Activated T-helper 1 cell treated with anti-CD3 and anti-CD28 coated beads, Interleukin-12 subunit alpha, Interleukin-12 subunit beta, Interleukin-2, Interleukin-4 antibody, amounts not matched to agents 30 ng/mL and 10 ng/mL and 1 ng/mL, durations not matched to agents 14 hours and 24 hours and 36 hours (primary cell): ENCODE measurements at regions of chr10 and their contacts with region 1.

Region 1: DNA sequence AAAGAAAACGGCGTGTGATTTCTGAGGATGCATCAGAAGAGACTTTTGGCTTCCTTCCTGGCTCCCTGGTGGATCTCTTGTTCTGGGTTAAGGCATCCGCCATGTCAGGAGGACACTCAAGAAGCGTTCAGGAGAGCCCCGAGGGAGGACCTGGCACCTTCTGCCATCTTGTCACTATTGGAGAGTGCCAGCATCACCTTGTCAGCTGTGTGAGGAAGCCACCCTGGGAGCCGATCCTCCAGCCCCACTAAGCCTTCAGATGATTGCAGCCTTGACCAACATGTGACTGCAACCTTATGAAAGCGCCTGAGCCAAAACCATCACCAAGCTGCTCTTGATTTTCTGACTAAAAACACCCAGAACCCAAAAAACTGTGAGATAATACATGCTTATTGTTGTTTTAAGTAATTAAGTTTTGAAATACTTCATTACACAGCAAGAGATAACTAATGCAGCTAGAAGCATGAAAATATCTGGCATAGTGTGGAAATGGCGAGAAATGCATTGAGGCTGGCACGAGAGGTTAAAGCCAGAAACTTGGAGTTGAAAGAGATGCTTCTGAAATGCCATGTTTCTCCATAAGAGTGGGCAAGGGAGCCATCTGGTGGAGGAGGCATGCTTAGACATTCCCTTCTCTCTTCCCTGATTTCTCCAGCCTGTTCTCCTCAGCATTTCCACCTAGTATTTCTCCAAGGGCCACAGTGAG is 5.4 kb upstream of the ZFYVE27 start:
- DNase-seq: no peak
- H3K4me3 Mint-ChIP-seq: no peak overlapping the region
- H3K27ac Mint-ChIP-seq: no peak overlapping the region
- H3K4me1 Mint-ChIP-seq: peaks cover 8% of the 10 kb centered on the region
- H3K27me3 Mint-ChIP-seq: peaks cover 1% of the 10 kb centered on the region

Region 2: DNA sequence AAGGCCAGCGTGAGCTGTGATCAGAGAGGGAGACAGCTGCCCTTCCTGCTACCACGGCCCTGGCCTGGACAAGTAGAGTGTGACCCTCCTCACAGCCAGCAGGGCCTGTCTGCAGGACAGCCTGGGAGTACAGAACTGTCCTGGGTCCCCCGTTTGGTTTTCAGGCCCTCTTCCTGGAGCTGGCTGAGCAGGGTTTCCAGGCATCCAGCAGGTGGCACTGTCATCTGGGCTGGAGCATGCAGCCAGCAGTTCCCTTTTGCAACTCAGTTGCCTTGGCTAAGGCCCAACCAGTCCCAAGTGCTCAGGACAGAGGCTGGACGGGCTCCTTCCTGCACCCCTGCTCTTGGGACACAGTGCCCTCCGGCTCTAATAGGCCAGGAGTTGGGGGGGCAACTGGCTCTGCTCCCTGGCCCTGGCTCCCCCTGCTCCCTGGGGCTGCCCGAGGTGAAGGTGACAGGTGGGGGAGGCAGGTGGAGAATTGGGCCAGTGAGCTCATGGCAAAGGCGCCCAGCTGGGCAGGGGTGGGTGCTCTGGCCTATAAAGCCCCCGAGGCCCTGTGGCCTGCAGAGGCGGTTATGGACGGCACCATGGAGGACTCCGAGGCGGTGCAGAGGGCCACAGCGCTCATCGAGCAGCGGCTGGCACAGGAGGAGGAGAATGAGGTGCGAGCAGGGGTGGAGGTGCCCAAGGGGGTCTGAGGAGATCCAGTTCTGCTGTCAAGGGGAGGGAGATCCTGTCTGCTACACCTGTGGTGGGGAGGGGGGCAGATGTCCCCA is 159.1 kb before region 1 on chr10 and contains the start of gene ANKRD2:
- intact Hi-C with region 1: loop called (anchors 2 kb)
- DNase-seq: peak; percentile 31
- H3K4me3 Mint-ChIP-seq: no peak within 1 kb of the TSS
- H3K27ac Mint-ChIP-seq: no peak within 1 kb of the TSS
- H3K4me1 Mint-ChIP-seq: no peaks in the 10 kb centered on the region
- H3K27me3 Mint-ChIP-seq: peaks cover 9% of the 10 kb centered on the region
- total RNA-seq, gene ANKRD2: not detected in 2 replicates

Region 3: GRCh38 chr10:97676770-97677581 is 54.5 kb before region 1 on chr10:
- intact Hi-C with region 1: loop called (anchors 1 kb)
- DNase-seq: no peak
- H3K4me3 Mint-ChIP-seq: no peak overlapping the region
- H3K27ac Mint-ChIP-seq: no peak overlapping the region
- H3K4me1 Mint-ChIP-seq: peaks cover 10% of the 10 kb centered on the region
- H3K27me3 Mint-ChIP-seq: no peaks in the 10 kb centered on the region

Region 4: DNA sequence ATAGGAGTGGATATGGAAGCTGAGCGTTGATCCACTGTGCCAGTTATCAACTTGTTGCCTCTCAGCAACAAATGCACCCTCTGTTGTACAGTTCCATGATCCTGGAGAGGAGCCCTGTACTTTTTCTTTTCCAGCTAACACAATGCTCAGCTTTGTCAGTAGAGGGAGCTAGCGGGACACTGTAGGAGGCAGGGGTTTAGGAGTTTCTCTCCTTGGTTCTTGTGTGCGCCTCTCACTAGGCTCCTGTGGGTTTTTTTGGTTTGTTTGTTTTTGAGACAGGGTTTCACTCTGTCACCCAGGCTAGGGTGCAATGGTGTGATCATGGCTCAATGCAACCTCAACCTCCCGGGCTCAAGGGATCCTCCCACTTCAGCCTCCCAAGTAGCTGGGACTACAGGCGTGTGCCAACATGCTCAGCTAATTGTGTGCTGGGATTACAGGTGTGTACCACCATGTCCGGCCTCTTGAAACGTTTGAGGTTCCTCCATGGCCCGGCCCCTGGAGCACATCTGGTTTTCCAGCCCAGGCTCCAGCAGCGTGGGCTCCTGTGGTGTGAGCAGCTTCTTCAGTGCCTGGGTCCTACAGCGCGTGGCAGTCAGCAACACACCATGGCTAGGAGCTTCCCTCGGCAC is 29.9 kb before region 1 on chr10:
- intact Hi-C with region 1: loop called (anchors 1 kb)
- DNase-seq: peak; percentile 34
- H3K4me3 Mint-ChIP-seq: no peak overlapping the region
- H3K27ac Mint-ChIP-seq: no peak overlapping the region
- H3K4me1 Mint-ChIP-seq: no peaks in the 10 kb centered on the region
- H3K27me3 Mint-ChIP-seq: peaks cover 8% of the 10 kb centered on the region

Region 5: GRCh38 chr10:97714048-97714371 is 17.5 kb before region 1 on chr10:
- intact Hi-C with region 1: loop called (anchors 1 kb)
- DNase-seq: peak; percentile 42
- H3K4me3 Mint-ChIP-seq: peak overlapping the region; percentile 97
- H3K27ac Mint-ChIP-seq: peak overlapping the region; percentile 90
- H3K4me1 Mint-ChIP-seq: peaks cover 15% of the 10 kb centered on the region
- H3K27me3 Mint-ChIP-seq: peaks cover 37% of the 10 kb centered on the region

Region 6: GRCh38 chr10:98080494-98080893 is 349.0 kb after region 1 on chr10:
- intact Hi-C with region 1: no loop called
- DNase-seq: no peak
- H3K4me3 Mint-ChIP-seq: no peak overlapping the region
- H3K27ac Mint-ChIP-seq: no peak overlapping the region
- H3K4me1 Mint-ChIP-seq: no peaks in the 10 kb centered on the region
- H3K27me3 Mint-ChIP-seq: peaks cover 2% of the 10 kb centered on the region